CD4-positive, alpha-beta memory T cell (primary cell): ENCODE measurements at regions of chr7 and their contacts with region 1.

Region 1: DNA sequence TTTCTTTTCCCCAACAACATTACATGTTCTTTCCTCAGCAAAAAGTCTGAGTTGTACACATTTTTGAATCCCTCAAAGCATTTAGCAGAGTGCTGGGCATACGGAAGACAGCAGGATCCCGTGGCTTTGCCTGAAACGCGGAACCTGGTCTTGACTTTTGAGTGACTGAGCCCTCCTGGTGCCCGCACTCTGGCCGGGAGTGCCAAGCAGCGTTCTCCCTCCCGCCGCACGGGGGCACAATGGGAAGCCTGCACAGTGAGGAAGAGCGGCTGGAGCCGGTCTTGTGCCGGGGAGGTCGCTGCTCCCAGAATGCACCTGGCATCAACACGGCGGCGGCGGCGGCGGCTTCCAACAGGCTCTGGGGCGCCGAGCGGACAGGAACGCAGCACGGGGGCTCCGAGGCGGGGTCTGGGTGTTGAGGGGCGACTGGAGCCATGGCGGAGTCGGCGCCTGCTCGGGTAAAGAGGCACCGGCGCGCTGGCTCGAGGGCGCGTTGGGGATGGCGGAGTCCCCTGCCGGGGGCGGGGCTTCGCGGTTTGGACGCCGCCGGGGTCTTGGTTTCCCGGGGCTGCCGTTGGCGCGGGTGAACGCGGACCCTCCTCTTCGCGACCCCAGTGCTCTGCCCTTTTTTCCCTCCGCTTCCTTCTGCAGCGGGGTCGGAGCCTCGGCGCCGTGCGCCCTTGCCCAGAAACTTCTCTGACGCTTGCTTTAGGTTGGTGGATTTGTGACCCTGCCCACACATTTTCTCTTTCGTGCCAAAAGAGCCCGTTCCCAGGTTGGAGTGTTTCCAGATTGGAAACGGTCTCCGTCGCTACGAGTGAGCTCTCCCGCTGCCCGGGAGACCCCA is at the start of gene ZNF212:
- DNase-seq: peak; percentile 82 to 88 (median 85)
- H3K4me3 ChIP-seq: peak within 1 kb of the TSS; percentile 89 to 98
- H3K4me3 Mint-ChIP-seq: peak within 1 kb of the TSS; percentile 91 to 94 (median 92)
- H3K27ac ChIP-seq: peak within 1 kb of the TSS; percentile 67
- H3K27ac Mint-ChIP-seq: peak within 1 kb of the TSS; percentile 79 to 93 (median 90)
- H3K4me1 ChIP-seq: peaks cover 26% of the 10 kb centered on the region
- H3K4me1 Mint-ChIP-seq: peaks cover 21 to 39% (median 32%) of the 10 kb centered on the region in 4 donors
- H3K27me3 ChIP-seq: no peaks in the 10 kb centered on the region
- H3K27me3 Mint-ChIP-seq: peaks cover 2 to 5% of the 10 kb centered on the region in 2 donors
- total RNA-seq, gene ZNF212: 21.5 to 24.0 TPM

Region 2: GRCh38 chr7:149147072-149147751 is 92.4 kb before region 1 on chr7 and contains the start of gene ZNF398:
- CTCF ChIA-PET with region 1: interaction called, 3 read pairs
- POLR2A ChIA-PET with region 1: no interaction called
- intact Hi-C with region 1: loop called (anchors 1 kb)
- DNase-seq: peak; percentile 83 to 89 (median 85)
- H3K4me3 ChIP-seq: peak within 1 kb of the TSS; percentile 71 to 74
- H3K4me3 Mint-ChIP-seq: peak within 1 kb of the TSS; percentile 85 to 95 (median 92)
- H3K27ac ChIP-seq: peak within 1 kb of the TSS; percentile 86
- H3K27ac Mint-ChIP-seq: peak within 1 kb of the TSS; percentile 87 to 97 (median 96)
- H3K4me1 ChIP-seq: peaks cover 35% of the 10 kb centered on the region
- H3K4me1 Mint-ChIP-seq: peaks cover 18 to 46% (median 32%) of the 10 kb centered on the region in 4 donors
- H3K27me3 ChIP-seq: no peaks in the 10 kb centered on the region
- H3K27me3 Mint-ChIP-seq: no peaks in the 10 kb centered on the region
- total RNA-seq, gene ZNF398: 26.9 to 28.4 TPM

Region 3: DNA sequence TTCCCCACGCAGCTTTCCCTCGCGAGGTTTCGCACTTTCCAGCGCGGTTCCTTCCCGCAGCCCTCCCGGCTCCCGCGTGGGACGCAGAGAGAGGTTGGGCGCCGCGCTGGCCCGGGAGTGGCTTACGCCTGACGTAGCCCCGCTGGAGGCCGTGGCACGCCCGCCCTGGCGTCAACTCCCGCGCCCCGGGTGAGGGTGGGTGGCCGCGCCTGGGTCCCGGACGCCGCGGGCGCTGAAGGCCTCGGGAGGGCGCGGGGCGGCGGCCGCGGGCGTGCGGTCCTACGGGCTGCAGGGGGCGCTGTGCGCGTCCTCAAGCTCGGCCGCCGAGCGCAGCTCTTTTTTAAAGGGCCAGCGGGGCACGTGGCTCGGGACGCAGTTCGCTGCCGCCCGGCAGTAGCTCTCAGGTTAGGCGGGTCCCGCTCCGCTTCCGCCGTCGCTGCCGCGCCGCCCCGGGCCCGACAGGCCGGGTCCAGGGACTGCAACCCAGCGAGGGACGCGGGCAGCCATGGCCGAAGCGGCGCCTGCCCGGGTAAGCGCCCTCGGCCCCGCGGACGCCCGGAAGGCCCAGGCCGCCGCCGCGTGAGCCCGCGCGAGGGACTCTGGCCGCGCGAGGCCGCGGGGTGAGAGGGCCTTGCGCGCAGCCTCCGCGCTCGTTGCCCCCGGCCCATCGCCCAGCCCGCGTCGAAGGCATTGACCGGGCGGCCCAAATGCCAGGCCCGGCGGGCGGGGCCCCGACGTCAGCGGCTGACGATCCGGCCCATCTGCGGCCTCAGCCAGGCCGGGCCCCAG is 22.5 kb after region 1 on chr7 and contains the start of gene ZNF783:
- CTCF ChIA-PET with region 1: interaction called, 13 read pairs
- POLR2A ChIA-PET with region 1: interaction called, 13 read pairs
- intact Hi-C with region 1: loop called (anchors 1 kb)
- DNase-seq: peak; percentile 84 to 89 (median 87)
- H3K4me3 ChIP-seq: peak within 1 kb of the TSS; percentile 52 to 61
- H3K4me3 Mint-ChIP-seq: peak within 1 kb of the TSS; percentile 84 to 92 (median 87)
- H3K27ac ChIP-seq: peak within 1 kb of the TSS; percentile 68
- H3K27ac Mint-ChIP-seq: peak within 1 kb of the TSS; percentile 87 to 95 (median 92)
- H3K4me1 ChIP-seq: peaks cover 25% of the 10 kb centered on the region
- H3K4me1 Mint-ChIP-seq: peaks cover 13 to 33% (median 21%) of the 10 kb centered on the region in 4 donors
- H3K27me3 ChIP-seq: no peaks in the 10 kb centered on the region
- H3K27me3 Mint-ChIP-seq: no peaks in the 10 kb centered on the region
- total RNA-seq, gene ZNF783: 42.6 to 43.5 TPM

Region 4: DNA sequence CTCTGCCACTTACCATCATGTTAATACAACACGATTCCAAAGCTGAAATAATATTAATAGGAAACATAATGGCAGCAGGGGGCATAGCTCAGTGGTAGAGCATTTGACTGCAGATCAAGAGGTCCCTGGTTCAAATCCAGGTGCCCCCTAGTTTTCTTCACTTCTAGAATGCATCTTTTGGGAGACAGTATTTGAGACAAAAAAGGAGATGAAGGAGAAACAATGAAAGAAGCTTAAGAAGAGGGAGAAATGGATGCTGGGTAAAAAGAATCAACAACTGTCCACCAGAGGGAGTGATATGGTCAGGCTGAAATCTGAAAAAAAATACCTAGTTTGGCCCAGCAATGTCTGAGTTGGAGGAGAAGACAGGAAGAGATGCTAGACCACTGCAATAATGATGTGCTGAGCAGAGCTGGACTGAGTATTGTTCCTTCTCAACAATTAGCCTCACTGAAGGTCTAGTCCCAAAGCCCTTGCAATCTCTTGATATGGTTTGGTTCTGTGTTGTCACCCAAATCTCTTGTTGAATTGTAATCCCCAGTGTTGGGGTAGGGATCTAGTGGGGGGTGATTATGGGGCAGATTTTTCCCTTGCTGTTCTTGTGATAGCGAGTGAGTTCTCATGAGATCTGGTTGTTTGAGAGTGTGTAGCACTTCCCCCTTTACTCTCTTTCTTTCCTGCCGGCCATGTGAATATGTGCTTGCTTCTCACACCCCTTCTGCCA is 70.7 kb after region 1 on chr7:
- CTCF ChIA-PET with region 1: no interaction called
- POLR2A ChIA-PET with region 1: no interaction called
- intact Hi-C with region 1: loop called (anchors 2 kb)
- DNase-seq: peak in 4 of 5 donors; percentile 20 to 38 (median 23)
- H3K4me3 ChIP-seq: no peak overlapping the region
- H3K4me3 Mint-ChIP-seq: no peak overlapping the region
- H3K27ac ChIP-seq: no peak overlapping the region
- H3K27ac Mint-ChIP-seq: peak overlapping the region in 4 of 7 donors; percentile 0 to 70 (median 18)
- H3K4me1 ChIP-seq: no peaks in the 10 kb centered on the region
- H3K4me1 Mint-ChIP-seq: peaks cover 0 to 5% (median 3%) of the 10 kb centered on the region in 4 donors
- H3K27me3 ChIP-seq: no peaks in the 10 kb centered on the region
- H3K27me3 Mint-ChIP-seq: peaks cover 0 to 2% of the 10 kb centered on the region in 2 donors

Region 5: GRCh38 chr7:149497456-149498261 is 258.1 kb after region 1 on chr7 and contains the start of gene ZNF746:
- CTCF ChIA-PET with region 1: no interaction called
- POLR2A ChIA-PET with region 1: no interaction called
- intact Hi-C with region 1: loop called (anchors 1 kb)
- DNase-seq: peak; percentile 77 to 81 (median 78)
- H3K4me3 ChIP-seq: peak within 1 kb of the TSS; percentile 62 to 84
- H3K4me3 Mint-ChIP-seq: peak within 1 kb of the TSS; percentile 92 to 99 (median 95)
- H3K27ac ChIP-seq: peak within 1 kb of the TSS; percentile 63
- H3K27ac Mint-ChIP-seq: peak within 1 kb of the TSS; percentile 91 to 98 (median 96)
- H3K4me1 ChIP-seq: peaks cover 31% of the 10 kb centered on the region
- H3K4me1 Mint-ChIP-seq: peaks cover 21 to 44% (median 27%) of the 10 kb centered on the region in 4 donors
- H3K27me3 ChIP-seq: no peaks in the 10 kb centered on the region
- H3K27me3 Mint-ChIP-seq: no peaks in the 10 kb centered on the region
- total RNA-seq, gene ZNF746: 25.2 to 25.6 TPM